Common myeloid progenitor, CD34-positive (primary cell): ENCODE measurements at regions of chr6 and their contacts with region 1.

Region 1: GRCh38 chr6:43758617-43759050 is 11.4 kb upstream of the VEGFA start:
- DNase-seq: peak in 2 of 3 donors; percentile 35 to 42
- H3K4me3 ChIP-seq: no peak overlapping the region
- H3K27ac ChIP-seq: no peak overlapping the region
- H3K4me1 ChIP-seq: peaks cover 0 to 6% (median 2%) of the 10 kb centered on the region in 4 experiments
- H3K27me3 ChIP-seq: peaks cover 0 to 3% (median 0%) of the 10 kb centered on the region in 5 experiments

Region 2: DNA sequence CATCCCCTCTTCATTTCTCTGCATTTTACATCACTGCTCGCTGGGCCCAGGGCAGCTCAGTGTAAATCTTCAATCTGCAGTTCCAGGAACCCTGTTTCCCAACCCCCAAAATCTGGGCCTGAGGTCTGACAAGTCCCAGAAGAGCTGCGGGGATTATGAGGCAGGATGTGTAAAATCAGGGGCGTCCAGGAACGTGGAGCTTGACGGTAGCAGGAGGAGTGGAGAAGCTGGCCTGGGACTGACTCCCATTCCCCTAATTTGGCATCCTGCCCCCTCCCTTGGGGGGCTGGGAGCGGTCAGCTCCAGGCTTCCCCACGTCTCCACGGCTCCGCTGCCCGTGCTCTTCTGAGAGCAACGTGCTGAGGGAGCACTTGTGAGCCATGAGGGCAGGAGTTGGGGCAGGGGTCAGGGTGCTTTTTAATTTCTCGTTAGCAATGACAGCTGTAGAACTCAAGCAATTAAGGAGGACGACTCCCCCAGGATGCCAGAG is 12.0 kb before region 1 on chr6:
- CTCF ChIA-PET with region 1: interaction called, 58 read pairs
- POLR2A ChIA-PET with region 1: no interaction called
- DNase-seq: no peak
- H3K4me3 ChIP-seq: no peak overlapping the region
- H3K27ac ChIP-seq: no peak overlapping the region
- H3K4me1 ChIP-seq: peaks cover 0 to 8% (median 0%) of the 10 kb centered on the region in 4 experiments
- H3K27me3 ChIP-seq: no peaks in the 10 kb centered on the region

Region 3: GRCh38 chr6:43790025-43790523 is 31.4 kb after region 1 on chr6:
- CTCF ChIA-PET with region 1: no interaction called
- POLR2A ChIA-PET with region 1: no interaction called
- DNase-seq: peak in 1 of 3 donors; percentile 24
- H3K4me3 ChIP-seq: no peak overlapping the region
- H3K27ac ChIP-seq: no peak overlapping the region
- H3K4me1 ChIP-seq: peaks cover 0 to 6% (median 4%) of the 10 kb centered on the region in 4 experiments
- H3K27me3 ChIP-seq: no peaks in the 10 kb centered on the region